ENCODE measurements at regions of chr2 and their contacts with region 1.

Region 1: GRCh38 chr2:135913727-135914365 is 37.6 kb upstream of the MCM6 start:
- DNase-seq: no peak
- H3K4me3 ChIP-seq: no peak overlapping the region
- H3K27ac ChIP-seq: no peak overlapping the region
- H3K4me1 ChIP-seq: peaks cover 0 to 3% (median 0%) of the 10 kb centered on the region in 4 donors
- H3K27me3 ChIP-seq: no peaks in the 10 kb centered on the region
- CTCF ChIP-seq: peak; percentile 64 to 81 (median 69)
- EP300 ChIP-seq: no peak
- POLR2A ChIP-seq: no peak

Region 2: GRCh38 chr2:135820003-135820618 is 93.7 kb before region 1 on chr2:
- in situ Hi-C with region 1: no loop called
- intact Hi-C with region 1: no loop called
- DNase-seq: no peak
- H3K4me3 ChIP-seq: no peak overlapping the region
- H3K27ac ChIP-seq: no peak overlapping the region
- H3K4me1 ChIP-seq: no peaks in the 10 kb centered on the region
- H3K27me3 ChIP-seq: no peaks in the 10 kb centered on the region
- CTCF ChIP-seq: no peak
- EP300 ChIP-seq: no peak
- POLR2A ChIP-seq: no peak

Region 3: GRCh38 chr2:136378712-136379595 is 465.1 kb after region 1 on chr2:
- in situ Hi-C with region 1: loop called (anchors 5 to 10 kb)
- intact Hi-C with region 1: loop called (anchors 5 kb)
- DNase-seq: peak; percentile 59
- H3K4me3 ChIP-seq: no peak overlapping the region
- H3K27ac ChIP-seq: no peak overlapping the region
- H3K4me1 ChIP-seq: no peaks in the 10 kb centered on the region
- H3K27me3 ChIP-seq: no peaks in the 10 kb centered on the region
- CTCF ChIP-seq: peak; percentile 54 to 63 (median 60)
- EP300 ChIP-seq: no peak
- POLR2A ChIP-seq: no peak

Region 4: GRCh38 chr2:136384531-136385303 is 470.9 kb after region 1 on chr2:
- in situ Hi-C with region 1: loop called (anchors 5 to 10 kb)
- intact Hi-C with region 1: loop called (anchors 5 kb)
- DNase-seq: peak; percentile 26
- H3K4me3 ChIP-seq: no peak overlapping the region
- H3K27ac ChIP-seq: no peak overlapping the region
- H3K4me1 ChIP-seq: no peaks in the 10 kb centered on the region
- H3K27me3 ChIP-seq: no peaks in the 10 kb centered on the region
- CTCF ChIP-seq: peak; percentile 33 to 49 (median 42)
- EP300 ChIP-seq: no peak
- POLR2A ChIP-seq: no peak